ENCODE measurements at regions of chr12 and their contacts with region 1.

Region 1: GRCh38 chr12:92717202-92717601 is 14.4 kb downstream of the PLEKHG7 start:
- DNase-seq: peak; percentile 23
- H3K4me3 ChIP-seq: no peak overlapping the region
- H3K27ac ChIP-seq: no peak overlapping the region
- H3K4me1 ChIP-seq: no peaks in the 10 kb centered on the region
- H3K27me3 ChIP-seq: no peaks in the 10 kb centered on the region
- CTCF ChIP-seq: peak; percentile 42 to 52

Region 2: DNA sequence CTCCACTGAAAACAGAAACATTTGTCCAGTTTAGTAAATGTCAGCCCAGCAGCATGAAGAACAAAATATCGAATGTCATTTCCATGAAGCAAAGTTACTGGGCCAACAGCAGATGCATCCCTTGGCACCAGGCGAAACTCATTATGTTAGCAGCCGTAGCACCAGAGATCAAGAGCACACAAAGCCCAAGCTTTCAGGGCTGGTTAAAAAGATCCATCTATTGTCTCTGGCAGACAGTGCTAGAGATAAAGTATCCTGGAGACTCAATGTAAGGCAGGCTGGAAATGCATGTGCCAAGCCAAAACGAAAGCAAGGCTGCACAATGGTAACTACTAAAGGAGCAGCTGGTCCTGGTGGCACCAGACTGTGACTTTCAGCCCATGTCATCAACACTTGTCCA is 134.7 kb before region 1 on chr12:
- CTCF ChIA-PET with region 1: no interaction called
- dilution Hi-C with region 1: no loop called
- in situ Hi-C with region 1: no loop called
- intact Hi-C with region 1: no loop called
- DNase-seq: no peak
- H3K4me3 ChIP-seq: no peak overlapping the region
- H3K27ac ChIP-seq: no peak overlapping the region
- H3K4me1 ChIP-seq: no peaks in the 10 kb centered on the region
- H3K27me3 ChIP-seq: no peaks in the 10 kb centered on the region
- CTCF ChIP-seq: no peak

Region 3: GRCh38 chr12:92654929-92655328 is 62.3 kb before region 1 on chr12:
- CTCF ChIA-PET with region 1: no interaction called
- dilution Hi-C with region 1: no loop called
- in situ Hi-C with region 1: no loop called
- intact Hi-C with region 1: no loop called
- DNase-seq: no peak
- H3K4me3 ChIP-seq: no peak overlapping the region
- H3K27ac ChIP-seq: no peak overlapping the region
- H3K4me1 ChIP-seq: no peaks in the 10 kb centered on the region
- H3K27me3 ChIP-seq: no peaks in the 10 kb centered on the region
- CTCF ChIP-seq: no peak

Region 4: DNA sequence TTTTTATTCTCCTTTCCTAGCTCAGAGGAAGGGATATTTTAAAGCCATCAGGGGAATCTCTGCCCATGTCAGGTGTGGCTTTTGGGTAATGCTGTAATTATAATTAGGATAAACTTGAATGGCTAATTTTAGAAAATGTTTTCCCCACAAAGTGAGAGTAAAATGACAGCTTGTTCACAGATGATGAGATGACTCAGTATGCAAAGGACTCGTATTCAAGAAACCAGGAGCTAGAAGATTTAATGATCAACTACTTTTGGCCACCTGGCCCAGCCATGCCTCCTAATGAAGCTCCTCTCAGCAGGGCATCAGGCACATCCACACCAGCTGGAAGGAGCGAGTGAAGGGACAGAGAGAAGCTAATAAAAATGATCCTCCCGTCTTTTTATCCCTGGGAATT is 43.4 kb before region 1 on chr12:
- CTCF ChIA-PET with region 1: no interaction called
- dilution Hi-C with region 1: no loop called
- in situ Hi-C with region 1: no loop called
- intact Hi-C with region 1: no loop called
- DNase-seq: no peak
- H3K4me3 ChIP-seq: no peak overlapping the region
- H3K27ac ChIP-seq: no peak overlapping the region
- H3K4me1 ChIP-seq: peaks cover 19% of the 10 kb centered on the region
- H3K27me3 ChIP-seq: no peaks in the 10 kb centered on the region
- CTCF ChIP-seq: no peak

Region 5: DNA sequence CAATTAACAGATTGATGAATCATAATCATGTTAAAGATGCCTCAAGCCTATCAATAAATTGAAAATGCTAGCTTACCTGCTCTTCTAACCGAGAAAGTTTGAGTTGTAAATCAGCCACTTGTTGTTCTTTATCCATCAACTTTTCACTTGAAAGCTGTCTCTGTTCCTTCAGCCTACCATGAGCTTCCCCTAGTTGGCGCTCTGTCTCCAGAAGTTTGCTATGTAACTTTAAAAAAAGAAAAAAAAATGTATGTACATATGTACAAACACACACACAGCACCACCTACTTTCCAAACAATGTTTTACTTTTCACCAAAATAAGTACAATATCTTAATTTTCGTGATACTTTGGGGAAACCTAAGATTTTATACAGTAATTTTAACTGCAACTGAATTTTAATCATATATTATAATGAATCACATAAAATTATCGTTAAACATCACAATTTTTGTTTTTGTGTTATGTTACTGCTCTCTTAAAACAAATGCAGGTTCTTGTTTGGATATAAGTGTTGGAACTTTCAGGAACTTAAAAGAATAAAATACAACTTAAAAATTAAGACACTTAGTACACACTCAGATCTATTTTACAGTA is 110.7 kb after region 1 on chr12:
- CTCF ChIA-PET with region 1: no interaction called
- dilution Hi-C with region 1: no loop called
- in situ Hi-C with region 1: no loop called
- intact Hi-C with region 1: loop called (anchors 5 kb)
- DNase-seq: peak; percentile 30
- H3K4me3 ChIP-seq: no peak overlapping the region
- H3K27ac ChIP-seq: no peak overlapping the region
- H3K4me1 ChIP-seq: no peaks in the 10 kb centered on the region
- H3K27me3 ChIP-seq: no peaks in the 10 kb centered on the region
- CTCF ChIP-seq: peak; percentile 87 to 92

Region 6: GRCh38 chr12:92844151-92844763 is 127.1 kb after region 1 on chr12:
- CTCF ChIA-PET with region 1: no interaction called
- dilution Hi-C with region 1: no loop called
- in situ Hi-C with region 1: no loop called
- intact Hi-C with region 1: no loop called
- DNase-seq: no peak
- H3K4me3 ChIP-seq: no peak overlapping the region
- H3K27ac ChIP-seq: no peak overlapping the region
- H3K4me1 ChIP-seq: peaks cover 2% of the 10 kb centered on the region
- H3K27me3 ChIP-seq: no peaks in the 10 kb centered on the region
- CTCF ChIP-seq: no peak